Natural killer cell (primary cell): ENCODE measurements at regions of chr17 and their contacts with region 1.

Region 1: GRCh38 chr17:64661976-64662773 is at the start of gene SMURF2:
- DNase-seq: peak; percentile 78 to 81
- ATAC-seq: peak; percentile 88 to 97 (median 88)
- H3K4me3 ChIP-seq: peak within 1 kb of the TSS; percentile 57
- H3K4me3 Mint-ChIP-seq: peak within 1 kb of the TSS; percentile 95
- H3K27ac ChIP-seq: peak within 1 kb of the TSS; percentile 67
- H3K27ac Mint-ChIP-seq: peak within 1 kb of the TSS; percentile 86 to 93
- H3K4me1 ChIP-seq: peaks cover 20% of the 10 kb centered on the region
- H3K4me1 Mint-ChIP-seq: peaks cover 39 to 42% of the 10 kb centered on the region in 2 donors
- H3K27me3 ChIP-seq: no peaks in the 10 kb centered on the region
- H3K27me3 Mint-ChIP-seq: no peaks in the 10 kb centered on the region
- CTCF ChIP-seq: no peak
- total RNA-seq, gene SMURF2: 43.8 to 54.5 (median 46.5) TPM

Region 2: GRCh38 chr17:64506576-64507477 is 155.3 kb before region 1 on chr17 and contains the start of gene CEP95:
- intact Hi-C with region 1: loop called (anchors 5 kb)
- DNase-seq: peak; percentile 95 to 98
- ATAC-seq: peak; percentile 58 to 83 (median 72)
- H3K4me3 ChIP-seq: peak within 1 kb of the TSS; percentile 85
- H3K4me3 Mint-ChIP-seq: peak within 1 kb of the TSS; percentile 95
- H3K27ac ChIP-seq: peak within 1 kb of the TSS; percentile 94
- H3K27ac Mint-ChIP-seq: peak within 1 kb of the TSS; percentile 97 to 99
- H3K4me1 ChIP-seq: peaks cover 12% of the 10 kb centered on the region
- H3K4me1 Mint-ChIP-seq: peaks cover 62 to 67% of the 10 kb centered on the region in 2 donors
- H3K27me3 ChIP-seq: no peaks in the 10 kb centered on the region
- H3K27me3 Mint-ChIP-seq: no peaks in the 10 kb centered on the region
- CTCF ChIP-seq: no peak
- total RNA-seq, gene CEP95: 152 to 187 (median 186) TPM

Region 3: GRCh38 chr17:64707019-64707591 is 44.9 kb after region 1 on chr17:
- intact Hi-C with region 1: loop called (anchors 5 kb)
- DNase-seq: no peak
- ATAC-seq: no peak
- H3K4me3 ChIP-seq: no peak overlapping the region
- H3K4me3 Mint-ChIP-seq: no peak overlapping the region
- H3K27ac ChIP-seq: no peak overlapping the region
- H3K27ac Mint-ChIP-seq: peak overlapping the region; percentile 22 to 40
- H3K4me1 ChIP-seq: peaks cover 58% of the 10 kb centered on the region
- H3K4me1 Mint-ChIP-seq: peaks cover 39 to 49% of the 10 kb centered on the region in 2 donors
- H3K27me3 ChIP-seq: no peaks in the 10 kb centered on the region
- H3K27me3 Mint-ChIP-seq: no peaks in the 10 kb centered on the region
- CTCF ChIP-seq: no peak